ENCODE measurements at regions of chr15 and their contacts with region 1.

Region 1: GRCh38 chr15:39934397-39935071 is 619 bp downstream of the EIF2AK4 start:
- DNase-seq: no peak
- H3K4me3 ChIP-seq: peak overlapping the region; percentile 64 to 90 (median 78)
- H3K27ac ChIP-seq: peak overlapping the region; percentile 88 to 94 (median 88)
- H3K4me1 ChIP-seq: peaks cover 0 to 48% (median 15%) of the 10 kb centered on the region in 4 donors
- H3K27me3 ChIP-seq: no peaks in the 10 kb centered on the region
- CTCF ChIP-seq: no peak
- EP300 ChIP-seq: no peak
- POLR2A ChIP-seq: no peak

Region 2: DNA sequence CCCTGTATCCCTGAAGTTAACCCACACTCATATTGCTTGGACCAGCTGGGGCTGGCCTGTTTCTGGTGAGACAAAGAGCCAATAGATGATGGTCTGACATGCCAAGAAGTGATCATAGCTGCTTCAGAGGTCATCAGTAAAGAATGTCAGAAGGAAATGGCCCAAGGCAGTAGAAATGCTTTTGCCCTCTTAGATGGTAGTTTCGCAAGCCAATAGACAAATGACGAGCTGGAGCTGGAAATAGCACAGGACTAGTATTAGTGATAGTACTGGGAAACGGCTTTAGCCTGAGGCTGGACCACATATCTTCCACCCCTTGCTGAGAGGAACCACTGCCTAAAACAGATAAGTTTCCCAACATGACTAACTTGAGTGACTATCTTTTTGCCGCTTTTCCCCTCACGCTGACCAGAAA is 529.8 kb before region 1 on chr15:
- intact Hi-C with region 1: loop called (anchors 10 kb)
- DNase-seq: no peak
- H3K4me3 ChIP-seq: no peak overlapping the region
- H3K27ac ChIP-seq: no peak overlapping the region
- H3K4me1 ChIP-seq: peaks cover 0 to 22% (median 14%) of the 10 kb centered on the region in 4 donors
- H3K27me3 ChIP-seq: no peaks in the 10 kb centered on the region
- CTCF ChIP-seq: no peak
- EP300 ChIP-seq: no peak
- POLR2A ChIP-seq: no peak

Region 3: GRCh38 chr15:39845582-39845981 is 89.0 kb before region 1 on chr15:
- intact Hi-C with region 1: no loop called
- DNase-seq: no peak
- H3K4me3 ChIP-seq: no peak overlapping the region
- H3K27ac ChIP-seq: no peak overlapping the region
- H3K4me1 ChIP-seq: no peaks in the 10 kb centered on the region
- H3K27me3 ChIP-seq: no peaks in the 10 kb centered on the region
- CTCF ChIP-seq: no peak
- EP300 ChIP-seq: no peak
- POLR2A ChIP-seq: no peak